ENCODE measurements at regions of chr3 and their contacts with region 1.

Region 1: DNA sequence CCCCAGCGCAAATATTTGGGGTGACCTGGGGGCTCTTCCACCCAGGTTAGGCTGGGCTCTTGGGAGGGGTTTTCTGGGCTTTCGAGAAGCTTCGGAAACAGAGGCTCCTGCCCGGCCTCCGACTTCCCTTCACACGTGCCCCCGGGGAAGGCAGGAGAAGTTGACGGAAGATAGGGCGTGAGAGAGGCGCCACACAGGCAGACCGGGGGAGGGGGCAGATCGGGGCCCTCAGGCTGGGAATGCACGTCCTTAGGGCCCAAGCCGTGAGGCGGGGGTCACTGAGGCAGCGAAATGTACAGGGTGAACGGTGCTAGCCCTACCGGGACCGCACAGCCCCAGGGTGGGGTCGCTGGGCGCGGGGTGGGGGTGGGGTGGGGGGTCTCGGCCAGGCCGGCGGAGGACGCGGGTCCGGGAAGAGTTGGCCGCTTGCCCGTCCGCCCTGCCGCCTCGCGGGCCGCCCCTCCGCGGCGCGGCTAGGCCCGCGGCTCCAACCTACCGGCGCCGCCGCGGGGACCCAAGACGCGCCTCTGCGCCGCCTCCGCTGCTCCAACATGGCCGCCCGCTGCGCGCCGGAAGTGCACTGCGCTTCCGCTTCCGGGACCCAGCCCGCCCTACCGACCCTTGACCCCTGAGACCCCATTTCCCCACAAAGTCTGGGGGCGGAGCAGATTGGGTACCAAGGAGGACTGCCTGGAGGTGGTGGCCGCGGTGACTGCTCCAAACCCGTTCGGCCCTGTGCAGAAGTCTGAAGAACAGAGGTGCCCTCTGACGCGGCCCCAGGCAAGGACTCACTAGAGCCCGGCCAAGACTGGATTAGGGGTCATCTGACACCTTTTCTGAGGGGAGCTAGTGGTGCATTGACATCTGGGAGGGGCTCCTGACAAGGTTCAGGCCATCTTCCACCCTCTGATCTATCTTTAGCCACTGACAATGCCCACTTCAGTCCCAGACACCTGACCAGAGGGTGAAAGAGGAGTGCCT is at the start of gene CCDC71:
- DNase-seq: peak; percentile 82 to 91
- ATAC-seq: peak; percentile 78 to 88 (median 85)
- H3K4me3 ChIP-seq: peak within 1 kb of the TSS; percentile 98
- H3K27ac ChIP-seq: peak within 1 kb of the TSS; percentile 95
- H3K4me1 ChIP-seq: peaks cover 21% of the 10 kb centered on the region
- H3K27me3 ChIP-seq: no peaks in the 10 kb centered on the region
- CTCF ChIP-seq: no peak
- total RNA-seq, gene CCDC71: 12.6 to 20.5 (median 14.7) TPM

Region 2: DNA sequence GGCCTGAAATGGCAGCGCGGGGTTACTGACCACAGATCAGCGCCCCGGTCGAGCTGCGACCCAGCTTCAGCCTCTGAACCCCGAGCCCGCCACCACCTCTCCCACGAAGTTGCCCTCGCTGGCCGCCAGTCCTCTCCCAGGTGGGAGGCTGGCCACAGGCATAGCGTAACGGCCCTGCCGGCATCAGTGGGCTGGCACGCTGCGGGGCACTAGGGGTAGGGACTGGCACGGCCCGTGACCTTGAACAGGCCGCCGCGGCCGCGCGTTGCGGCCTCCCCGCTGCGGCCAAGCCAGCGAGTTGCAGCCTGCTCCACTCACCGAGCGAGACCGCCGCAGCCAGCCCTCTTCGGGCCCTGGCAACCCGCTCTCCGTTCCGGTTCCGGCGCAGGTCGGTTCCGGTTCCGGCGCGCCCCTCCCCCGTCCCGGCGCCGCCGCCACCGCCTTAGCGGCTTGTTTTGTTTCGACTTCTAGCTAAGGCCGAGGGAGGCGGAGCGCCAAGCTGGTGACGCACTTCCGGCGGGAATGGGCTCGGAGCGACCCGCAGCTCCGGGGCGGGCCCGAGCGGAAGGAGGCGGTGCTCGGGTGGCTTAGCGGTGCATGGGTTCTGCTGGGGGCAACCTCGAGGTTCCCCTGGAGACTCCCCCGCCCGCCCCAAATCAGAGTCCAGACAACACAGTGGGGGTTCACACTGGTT is 45.5 kb before region 1 on chr3 and contains the start of gene USP19:
- intact Hi-C with region 1: loop called in 1 of 2 experiments (anchors 5 kb)
- DNase-seq: peak; percentile 97 to 99
- ATAC-seq: peak; percentile 91 to 95 (median 94)
- H3K4me3 ChIP-seq: peak within 1 kb of the TSS; percentile 98
- H3K27ac ChIP-seq: peak within 1 kb of the TSS; percentile 95
- H3K4me1 ChIP-seq: peaks cover 16% of the 10 kb centered on the region
- H3K27me3 ChIP-seq: no peaks in the 10 kb centered on the region
- CTCF ChIP-seq: no peak
- total RNA-seq, gene USP19: 79.5 to 109 (median 96.3) TPM